ENCODE measurements at regions of chr18 and their contacts with region 1.

Region 1: GRCh38 chr18:77067291-77068061 is 65.1 kb downstream of the MBP start:
- DNase-seq: no peak

Region 2: DNA sequence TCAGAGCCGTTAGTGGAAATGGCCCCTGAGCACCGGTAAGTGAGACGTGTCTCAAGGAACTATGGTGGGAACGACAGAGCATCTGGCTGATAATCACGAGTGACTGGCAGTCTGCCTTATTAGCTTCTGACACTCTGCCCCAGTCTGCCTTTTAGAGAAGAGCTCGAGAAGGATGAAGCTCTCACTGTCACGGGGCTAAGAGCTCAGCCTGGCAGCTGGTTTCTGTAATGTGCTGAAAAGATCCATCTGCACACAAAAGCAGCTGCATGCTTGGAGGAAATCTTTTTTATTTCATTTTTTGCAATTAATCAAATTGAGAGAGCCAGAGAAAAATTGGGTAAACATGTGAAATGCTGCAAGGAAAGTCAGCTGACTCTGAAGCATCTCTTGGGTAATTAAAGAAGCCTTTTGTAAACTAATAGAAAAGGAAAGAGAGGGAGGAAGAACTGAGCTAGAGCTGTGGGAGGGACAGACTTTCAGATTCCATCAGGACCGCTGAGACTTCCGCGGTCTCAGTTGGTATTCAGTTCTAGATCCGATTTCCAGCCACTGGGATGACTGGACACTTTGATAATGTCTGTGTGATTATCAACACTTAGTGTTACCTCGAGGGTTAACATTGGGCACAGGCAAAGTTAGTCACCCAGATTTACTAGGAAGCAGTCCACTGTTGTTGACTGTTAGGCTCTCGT is 40.7 kb after region 1 on chr18:
- intact Hi-C with region 1: loop called (anchors 5 kb)
- DNase-seq: no peak

Region 3: DNA sequence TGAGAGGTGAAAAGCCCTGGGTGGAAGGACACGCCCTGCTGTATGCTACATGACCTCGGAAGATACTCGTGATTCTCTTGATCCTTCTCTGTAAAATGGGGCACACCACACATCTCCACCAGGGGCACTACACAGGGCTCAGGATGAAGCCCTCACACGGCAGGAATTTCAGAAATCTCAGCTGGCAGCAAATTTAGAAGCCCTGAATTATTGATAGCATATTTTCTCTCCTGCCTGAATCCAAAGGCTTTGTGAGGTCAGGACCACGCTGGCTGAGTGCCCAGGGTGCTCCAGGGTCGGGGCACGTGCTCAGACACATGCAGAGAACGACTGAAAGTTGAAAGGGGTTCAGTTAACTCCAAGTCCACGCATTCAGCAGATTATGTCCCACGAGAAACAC is 140.1 kb after region 1 on chr18:
- intact Hi-C with region 1: loop called (anchors 5 kb)
- DNase-seq: no peak

Measured in cardiac septum (tissue), 1 donor.